Right cardiac atrium (tissue), 5 donors: ENCODE measurements at regions of chr6 and their contacts with region 1.

Region 1: DNA sequence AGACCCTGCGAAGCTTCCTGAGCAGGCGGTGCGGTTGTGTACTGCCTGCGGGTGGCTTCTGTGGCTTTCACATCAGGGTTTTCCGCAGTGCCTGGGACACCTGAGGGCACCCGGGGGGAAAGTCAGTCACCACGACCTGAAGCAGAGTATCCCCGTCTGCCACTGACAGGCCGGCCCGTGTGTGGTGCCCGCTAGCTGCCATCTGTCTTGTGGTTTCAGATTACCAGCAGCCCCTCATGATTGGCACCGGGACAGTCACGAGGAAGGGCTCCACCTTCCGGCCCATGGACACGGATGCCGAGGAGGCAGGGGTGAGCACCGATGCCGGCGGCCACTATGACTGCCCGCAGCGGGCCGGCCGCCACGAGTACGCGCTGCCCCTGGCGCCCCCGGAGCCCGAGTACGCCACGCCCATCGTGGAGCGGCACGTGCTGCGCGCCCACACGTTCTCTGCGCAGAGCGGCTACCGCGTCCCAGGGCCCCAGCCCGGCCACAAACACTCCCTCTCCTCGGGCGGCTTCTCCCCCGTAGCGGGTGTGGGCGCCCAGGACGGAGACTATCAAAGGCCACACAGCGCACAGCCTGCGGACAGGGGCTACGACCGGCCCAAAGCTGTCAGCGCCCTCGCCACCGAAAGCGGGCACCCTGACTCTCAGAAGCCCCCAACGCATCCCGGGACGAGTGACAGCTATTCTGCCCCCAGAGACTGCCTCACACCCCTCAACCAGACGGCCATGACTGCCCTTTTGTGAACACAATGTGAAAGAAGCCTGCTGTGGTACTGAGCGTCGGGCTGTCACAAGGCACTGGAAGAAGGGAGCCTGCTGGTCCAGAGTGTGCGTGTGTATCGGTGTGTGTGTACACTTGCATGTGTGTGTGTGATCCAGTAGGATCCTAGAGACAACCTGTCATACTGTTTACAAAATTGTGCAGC is 54.4 kb downstream of the GOPC start:
- DNase-seq: peak; percentile 72 to 87 (median 86)
- ATAC-seq: peak; percentile 93 to 95
- H3K4me3 ChIP-seq: peak overlapping the region; percentile 26
- H3K27ac ChIP-seq: peak overlapping the region; percentile 14
- H3K4me1 ChIP-seq: no peaks in the 10 kb centered on the region
- H3K27me3 ChIP-seq: no peaks in the 10 kb centered on the region

Region 2: GRCh38 chr6:117449549-117450439 is 98.2 kb before region 1 on chr6:
- intact Hi-C with region 1: loop called in 2 of 4 experiments (anchors 5 kb)
- DNase-seq: peak; percentile 25 to 47 (median 33)
- ATAC-seq: peak in 1 of 2 donors; percentile 37
- H3K4me3 ChIP-seq: no peak overlapping the region
- H3K27ac ChIP-seq: no peak overlapping the region
- H3K4me1 ChIP-seq: no peaks in the 10 kb centered on the region
- H3K27me3 ChIP-seq: no peaks in the 10 kb centered on the region

Region 3: GRCh38 chr6:117482240-117483003 is 65.5 kb before region 1 on chr6 and contains the start of gene DCBLD1:
- intact Hi-C with region 1: loop called in 1 of 4 experiments (anchors 5 kb)
- DNase-seq: peak; percentile 84 to 93 (median 92)
- ATAC-seq: peak; percentile 95 to 96
- H3K4me3 ChIP-seq: peak within 1 kb of the TSS; percentile 71
- H3K27ac ChIP-seq: peak within 1 kb of the TSS; percentile 78
- H3K4me1 ChIP-seq: no peaks in the 10 kb centered on the region
- H3K27me3 ChIP-seq: no peaks in the 10 kb centered on the region
- total RNA-seq, gene DCBLD1: 3.2 to 5.7 (median 4.1) TPM

Region 4: DNA sequence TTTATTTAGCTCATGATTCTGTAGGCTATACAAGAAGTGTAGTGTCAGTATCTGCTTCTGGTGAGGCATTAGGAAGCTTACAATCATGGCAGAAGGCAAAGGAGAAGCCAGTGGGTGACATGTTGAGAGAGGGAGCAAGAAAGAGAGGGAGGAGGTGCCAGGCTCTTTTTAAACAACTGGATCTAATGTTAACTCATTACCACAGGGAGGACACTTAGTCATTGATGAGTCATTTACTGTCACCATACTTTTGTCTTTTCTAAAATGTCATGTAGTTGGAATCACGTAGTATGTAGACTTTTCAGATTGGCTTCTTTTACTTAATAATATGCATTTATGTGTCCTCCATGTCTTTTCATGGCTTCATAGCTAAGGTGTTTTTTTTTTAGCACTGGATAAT is 185.4 kb after region 1 on chr6:
- intact Hi-C with region 1: no loop called
- DNase-seq: no peak
- ATAC-seq: no peak
- H3K4me3 ChIP-seq: no peak overlapping the region
- H3K27ac ChIP-seq: no peak overlapping the region
- H3K4me1 ChIP-seq: no peaks in the 10 kb centered on the region
- H3K27me3 ChIP-seq: no peaks in the 10 kb centered on the region

Region 5: GRCh38 chr6:117880824-117881223 is 332.9 kb after region 1 on chr6:
- intact Hi-C with region 1: no loop called
- DNase-seq: no peak
- ATAC-seq: no peak
- H3K4me3 ChIP-seq: no peak overlapping the region
- H3K27ac ChIP-seq: no peak overlapping the region
- H3K4me1 ChIP-seq: no peaks in the 10 kb centered on the region
- H3K27me3 ChIP-seq: no peaks in the 10 kb centered on the region